Vagina (tissue), 2 donors: ENCODE measurements at regions of chr14 and their contacts with region 1.

Region 1: DNA sequence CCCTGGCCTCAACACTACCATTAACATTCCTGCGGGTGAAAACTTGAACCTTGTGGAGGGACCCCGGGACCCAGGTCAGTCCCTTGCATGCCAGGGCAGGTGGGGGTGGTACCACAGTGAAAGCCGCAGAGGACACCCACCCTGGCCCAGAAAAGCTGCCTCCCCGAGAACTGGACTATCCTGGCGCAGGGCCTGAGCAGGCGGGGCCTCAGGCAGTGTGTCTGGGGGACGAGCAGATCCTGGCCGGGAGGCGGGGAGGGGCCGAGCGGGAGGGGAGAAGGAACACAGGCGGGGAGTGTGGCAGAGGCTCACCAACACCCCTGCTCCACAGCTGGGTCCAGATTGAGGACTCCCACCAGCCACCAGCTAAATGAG is 10.0 kb downstream of the AHNAK2 start:
- DNase-seq: peak in 1 of 2 donors; percentile 92
- H3K4me3 ChIP-seq: peak overlapping the region; percentile 64 to 76
- H3K27ac ChIP-seq: peak overlapping the region; percentile 99
- H3K4me1 ChIP-seq: peaks cover 69% of the 10 kb centered on the region
- H3K27me3 ChIP-seq: no peaks in the 10 kb centered on the region
- CTCF ChIP-seq: no peak
- POLR2A ChIP-seq: peak in 1 of 2 donors; percentile 18

Region 2: DNA sequence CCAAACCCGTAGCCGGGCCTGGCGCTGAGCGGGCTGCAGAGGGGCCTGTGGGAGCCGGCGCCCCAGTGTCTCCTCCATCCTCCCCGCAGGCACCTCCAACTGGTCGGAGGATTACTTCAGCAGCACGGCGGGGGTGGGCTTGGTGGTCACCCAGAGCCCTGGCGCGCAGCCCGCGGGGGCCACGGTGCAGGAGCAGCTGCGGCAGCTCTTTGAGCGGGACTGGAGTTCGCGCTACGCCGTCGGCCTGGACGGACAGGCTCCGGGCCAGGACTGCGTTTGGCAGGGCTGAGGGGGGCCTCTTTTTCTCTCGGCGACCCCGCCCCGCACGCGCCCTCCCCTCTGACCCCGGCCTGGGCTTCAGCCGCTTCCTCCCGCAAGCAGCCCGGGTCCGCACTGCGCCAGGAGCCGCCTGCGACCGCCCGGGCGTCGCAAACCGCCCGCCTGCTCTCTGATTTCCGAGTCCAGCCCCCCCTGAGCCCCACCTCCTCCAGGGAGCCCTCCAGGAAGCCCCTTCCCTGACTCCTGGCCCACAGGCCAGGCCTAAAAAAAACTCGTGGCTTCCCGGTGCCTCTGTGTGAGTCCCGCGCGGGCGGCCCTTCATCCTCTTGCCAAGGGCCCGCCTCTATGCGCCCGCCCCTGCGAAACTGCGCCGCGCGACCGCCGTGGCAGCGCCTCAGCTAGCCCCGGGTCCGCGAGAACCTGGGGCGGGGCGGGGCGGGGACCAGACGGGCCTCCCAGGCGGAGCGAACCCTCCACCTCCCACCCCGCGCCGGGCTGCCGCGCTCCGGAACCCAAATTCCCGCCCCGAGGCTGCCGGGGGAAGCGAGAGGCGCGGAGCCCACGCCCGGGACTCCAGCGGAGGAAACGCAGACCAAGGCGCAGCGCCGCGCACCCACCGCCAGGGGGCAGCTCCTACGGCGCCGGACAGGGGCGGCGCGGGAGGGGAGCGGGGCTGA is 35.2 kb before region 1 on chr14:
- intact Hi-C with region 1: loop called (anchors 5 kb)
- DNase-seq: no peak
- H3K4me3 ChIP-seq: peak overlapping the region; percentile 57 to 61
- H3K27ac ChIP-seq: peak overlapping the region; percentile 71
- H3K4me1 ChIP-seq: peaks cover 30% of the 10 kb centered on the region
- H3K27me3 ChIP-seq: no peaks in the 10 kb centered on the region
- CTCF ChIP-seq: peak; percentile 56 to 86 (median 79)
- POLR2A ChIP-seq: no peak